Activated CD4-positive, alpha-beta memory T cell treated with anti-CD3 and anti-CD28 coated beads for 36 hours (primary cell): ENCODE measurements at regions of chr10 and their contacts with region 1.

Region 1: GRCh38 chr10:17228091-17228940 is at the start of gene VIM:
- DNase-seq: peak; percentile 93
- H3K4me3 Mint-ChIP-seq: peak within 1 kb of the TSS; percentile 95
- H3K27ac Mint-ChIP-seq: peak within 1 kb of the TSS; percentile 87
- H3K4me1 Mint-ChIP-seq: peaks cover 42% of the 10 kb centered on the region
- H3K27me3 Mint-ChIP-seq: peaks cover 1% of the 10 kb centered on the region
- total RNA-seq, gene VIM: 515 to 525 TPM

Region 2: DNA sequence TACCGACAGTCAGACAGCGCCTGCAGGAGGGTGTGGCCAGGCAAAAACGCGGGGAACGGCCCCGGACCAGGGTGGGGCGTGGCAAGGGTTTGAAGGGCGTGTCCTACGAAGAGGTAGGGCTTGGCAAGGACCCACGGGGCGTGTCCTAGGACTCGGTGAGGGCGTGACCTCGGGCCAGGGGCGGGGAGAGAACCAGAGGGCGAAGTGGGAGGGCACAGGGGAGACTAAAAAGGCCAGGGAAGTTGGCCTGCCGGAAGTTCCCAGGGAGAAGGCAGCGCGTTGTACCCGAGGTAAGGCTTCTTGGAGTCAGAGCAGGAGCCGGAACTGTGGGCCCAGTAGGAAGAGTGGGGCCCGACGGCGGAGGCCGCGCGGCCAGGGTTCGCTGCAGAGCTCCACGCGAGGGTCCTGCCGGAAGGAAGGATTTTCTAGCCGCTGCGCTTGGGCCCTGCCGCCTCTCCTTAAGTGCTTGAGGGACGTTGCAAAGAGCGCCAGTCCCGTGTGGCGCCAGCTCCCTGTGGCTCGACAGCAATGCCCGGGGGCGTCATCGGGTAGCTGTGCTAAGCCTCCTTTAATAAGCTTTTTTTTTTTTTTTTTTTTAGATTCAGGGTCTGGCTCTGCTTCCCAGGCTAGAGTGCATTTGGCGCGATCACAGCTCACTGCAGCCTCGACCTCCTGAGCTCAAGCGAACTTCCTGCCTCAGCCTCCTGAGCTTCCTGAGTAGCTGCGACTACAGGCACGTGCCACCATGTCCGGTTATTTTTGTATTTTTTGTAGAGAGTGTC is 791.4 kb before region 1 on chr10 and contains the start of gene PTER:
- CTCF ChIA-PET with region 1: no interaction called
- POLR2A ChIA-PET with region 1: no interaction called
- intact Hi-C with region 1: loop called (anchors 5 kb)
- DNase-seq: peak; percentile 99
- H3K4me3 Mint-ChIP-seq: peak within 1 kb of the TSS; percentile 86
- H3K27ac Mint-ChIP-seq: peak within 1 kb of the TSS; percentile 84
- H3K4me1 Mint-ChIP-seq: peaks cover 43% of the 10 kb centered on the region
- H3K27me3 Mint-ChIP-seq: no peaks in the 10 kb centered on the region
- total RNA-seq, gene PTER: 25.1 to 27.2 TPM

Region 3: DNA sequence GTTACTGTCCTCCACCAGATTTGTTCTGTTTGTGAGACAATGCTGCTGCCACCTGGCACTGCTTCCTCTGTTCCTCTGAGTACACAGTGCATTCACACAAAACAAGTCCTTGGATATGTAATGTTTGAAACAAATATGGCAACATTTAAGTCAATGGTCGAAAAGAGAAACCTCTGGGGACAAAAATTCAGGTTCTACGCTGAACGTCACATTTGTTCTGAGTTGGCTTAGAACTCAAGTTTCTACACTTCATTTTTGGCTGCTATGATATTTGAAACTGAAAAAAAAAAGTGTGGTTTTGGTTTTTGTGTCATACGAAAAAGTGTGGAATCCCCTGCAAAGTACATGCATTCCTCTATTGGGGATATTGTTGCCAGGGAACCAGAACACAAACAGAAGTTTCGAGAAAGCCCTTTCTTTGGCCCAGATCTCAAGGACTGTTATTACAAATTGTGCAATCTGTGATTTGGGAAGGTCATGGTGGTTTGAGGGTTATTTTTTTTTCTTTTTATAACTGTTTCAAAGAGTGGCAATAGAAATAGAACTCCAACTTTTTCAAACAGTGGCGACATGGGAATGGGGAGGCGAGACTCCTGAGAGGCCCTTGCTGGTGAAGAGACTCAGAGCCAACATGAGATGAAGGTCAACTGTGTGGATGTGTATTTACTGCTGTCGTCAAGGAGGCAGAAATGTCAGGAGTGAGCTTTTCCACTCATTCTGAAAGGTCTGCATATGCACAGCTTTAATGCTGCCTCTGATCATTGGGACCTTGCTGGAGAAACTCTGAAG is 226.2 kb before region 1 on chr10:
- CTCF ChIA-PET with region 1: no interaction called
- POLR2A ChIA-PET with region 1: interaction called, 5 read pairs
- intact Hi-C with region 1: loop called (anchors 1 kb)
- DNase-seq: peak; percentile 43
- H3K4me3 Mint-ChIP-seq: no peak overlapping the region
- H3K27ac Mint-ChIP-seq: peak overlapping the region; percentile 63
- H3K4me1 Mint-ChIP-seq: peaks cover 43% of the 10 kb centered on the region
- H3K27me3 Mint-ChIP-seq: peaks cover 13% of the 10 kb centered on the region

Region 4: GRCh38 chr10:17200912-17201793 is 27.2 kb before region 1 on chr10 and contains the start of gene TRDMT1:
- CTCF ChIA-PET with region 1: interaction called, 29 read pairs
- POLR2A ChIA-PET with region 1: interaction called, 50 read pairs
- intact Hi-C with region 1: loop called (anchors 1 kb)
- DNase-seq: peak; percentile 82
- H3K4me3 Mint-ChIP-seq: peak within 1 kb of the TSS; percentile 94
- H3K27ac Mint-ChIP-seq: peak within 1 kb of the TSS; percentile 91
- H3K4me1 Mint-ChIP-seq: peaks cover 46% of the 10 kb centered on the region
- H3K27me3 Mint-ChIP-seq: no peaks in the 10 kb centered on the region
- total RNA-seq, gene TRDMT1: 5.0 to 5.8 TPM

Region 5: GRCh38 chr10:17216217-17216900 is 12.0 kb before region 1 on chr10:
- CTCF ChIA-PET with region 1: interaction called, 15 read pairs
- POLR2A ChIA-PET with region 1: interaction called, 20 read pairs
- intact Hi-C with region 1: loop called (anchors 1 kb)
- DNase-seq: peak; percentile 35
- H3K4me3 Mint-ChIP-seq: peak overlapping the region; percentile 7
- H3K27ac Mint-ChIP-seq: peak overlapping the region; percentile 88
- H3K4me1 Mint-ChIP-seq: peaks cover 44% of the 10 kb centered on the region
- H3K27me3 Mint-ChIP-seq: no peaks in the 10 kb centered on the region